ENCODE measurements at regions of chrX and their contacts with region 1.

Region 1: DNA sequence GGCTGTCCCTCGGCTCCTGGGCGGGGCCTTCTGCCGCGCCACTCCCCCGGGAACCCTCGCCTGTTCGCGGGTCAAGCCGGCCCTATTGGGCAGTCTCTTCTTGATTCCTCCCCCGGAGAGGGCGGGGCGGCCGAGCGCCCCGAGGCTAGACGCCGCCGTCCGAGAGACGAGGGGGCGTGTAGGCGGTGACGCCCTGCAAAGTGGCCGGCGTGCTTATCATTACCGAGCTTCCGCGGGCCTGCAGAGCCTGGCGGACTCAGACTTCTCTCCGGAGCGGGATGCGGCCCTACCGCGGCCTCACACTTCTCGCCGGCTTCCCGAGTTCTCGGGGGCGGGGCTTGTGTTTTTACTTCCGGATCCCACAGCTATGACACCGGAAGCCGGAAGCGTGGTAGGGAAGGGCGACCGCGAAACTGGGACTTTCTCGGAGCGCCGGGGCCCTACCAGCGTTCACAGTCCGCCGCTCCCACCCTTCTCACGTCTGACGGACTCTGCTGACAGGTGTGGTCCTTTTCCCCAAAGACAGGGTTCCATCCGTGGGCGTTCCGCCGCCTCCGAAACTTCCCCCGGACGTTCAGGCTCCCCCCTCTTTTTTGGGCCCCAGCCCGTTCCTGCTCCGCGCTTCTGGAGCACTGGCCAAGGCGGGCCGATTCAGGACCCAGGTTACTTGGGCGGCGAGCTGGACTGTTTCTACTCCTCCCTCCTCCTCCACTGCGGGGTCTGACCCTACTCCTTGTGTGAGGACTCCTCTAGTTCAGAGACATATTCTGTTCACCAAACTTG is at the start of gene IKBKG:
- DNase-seq: no peak
- ATAC-seq: peak; percentile 89
- H3K4me3 ChIP-seq: peak within 1 kb of the TSS; percentile 77 to 98
- H3K27ac ChIP-seq: peak within 1 kb of the TSS; percentile 99
- H3K4me1 ChIP-seq: peaks cover 45% of the 10 kb centered on the region
- H3K27me3 ChIP-seq: no peaks in the 10 kb centered on the region
- CTCF ChIP-seq: no peak
- total RNA-seq, gene IKBKG: 76.3 TPM

Region 2: GRCh38 chrX:154695911-154696675 is 148.7 kb after region 1 on chrX:
- CTCF ChIA-PET with region 1: interaction called, 11 read pairs
- POLR2A ChIA-PET with region 1: no interaction called
- in situ Hi-C with region 1: no loop called
- intact Hi-C with region 1: no loop called
- DNase-seq: no peak
- ATAC-seq: no peak
- H3K4me3 ChIP-seq: no peak overlapping the region
- H3K27ac ChIP-seq: no peak overlapping the region
- H3K4me1 ChIP-seq: no peaks in the 10 kb centered on the region
- H3K27me3 ChIP-seq: no peaks in the 10 kb centered on the region
- CTCF ChIP-seq: no peak

Region 3: GRCh38 chrX:154714925-154715324 is 167.5 kb after region 1 on chrX:
- CTCF ChIA-PET with region 1: no interaction called
- POLR2A ChIA-PET with region 1: interaction called, 11 read pairs
- in situ Hi-C with region 1: no loop called
- intact Hi-C with region 1: no loop called
- DNase-seq: no peak
- ATAC-seq: peak; percentile 91
- H3K4me3 ChIP-seq: no peak overlapping the region
- H3K27ac ChIP-seq: no peak overlapping the region
- H3K4me1 ChIP-seq: peaks cover 10% of the 10 kb centered on the region
- H3K27me3 ChIP-seq: no peaks in the 10 kb centered on the region
- CTCF ChIP-seq: peak; percentile 77

Measured in Panc1 (cell line).